BJ (cell line): ENCODE measurements at regions of chr12 and their contacts with region 1.

Region 1: DNA sequence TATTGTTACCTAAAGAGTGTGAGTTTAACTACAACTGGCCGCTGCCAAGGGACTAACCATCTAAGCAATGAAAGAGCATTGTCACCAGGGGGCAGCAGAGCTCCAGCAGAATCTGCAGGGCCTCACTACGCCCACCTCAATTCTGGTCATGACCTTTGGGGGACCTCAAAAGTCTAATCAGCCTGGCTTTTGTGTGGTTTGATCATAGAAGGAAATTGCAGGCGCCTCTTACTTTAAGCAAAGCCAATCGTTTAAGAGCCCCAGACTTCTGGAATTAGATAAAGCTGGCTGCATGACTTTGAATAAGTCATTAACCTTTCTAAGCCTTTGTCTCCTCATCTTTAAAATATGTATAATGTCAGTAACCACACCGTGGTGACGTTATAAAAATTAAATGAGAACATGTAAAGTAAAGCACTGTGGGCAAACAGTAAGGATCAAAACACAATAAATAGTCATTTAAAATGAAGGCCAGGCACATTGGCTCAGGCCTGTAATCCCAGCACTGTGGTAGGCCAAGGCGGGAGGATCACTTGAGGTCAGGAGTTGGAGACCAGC is 58.6 kb downstream of the TBX3 start:
- DNase-seq: peak; percentile 50
- H3K4me3 ChIP-seq: no peak overlapping the region
- H3K27me3 ChIP-seq: no peaks in the 10 kb centered on the region
- CTCF ChIP-seq: peak; percentile 90

Region 2: DNA sequence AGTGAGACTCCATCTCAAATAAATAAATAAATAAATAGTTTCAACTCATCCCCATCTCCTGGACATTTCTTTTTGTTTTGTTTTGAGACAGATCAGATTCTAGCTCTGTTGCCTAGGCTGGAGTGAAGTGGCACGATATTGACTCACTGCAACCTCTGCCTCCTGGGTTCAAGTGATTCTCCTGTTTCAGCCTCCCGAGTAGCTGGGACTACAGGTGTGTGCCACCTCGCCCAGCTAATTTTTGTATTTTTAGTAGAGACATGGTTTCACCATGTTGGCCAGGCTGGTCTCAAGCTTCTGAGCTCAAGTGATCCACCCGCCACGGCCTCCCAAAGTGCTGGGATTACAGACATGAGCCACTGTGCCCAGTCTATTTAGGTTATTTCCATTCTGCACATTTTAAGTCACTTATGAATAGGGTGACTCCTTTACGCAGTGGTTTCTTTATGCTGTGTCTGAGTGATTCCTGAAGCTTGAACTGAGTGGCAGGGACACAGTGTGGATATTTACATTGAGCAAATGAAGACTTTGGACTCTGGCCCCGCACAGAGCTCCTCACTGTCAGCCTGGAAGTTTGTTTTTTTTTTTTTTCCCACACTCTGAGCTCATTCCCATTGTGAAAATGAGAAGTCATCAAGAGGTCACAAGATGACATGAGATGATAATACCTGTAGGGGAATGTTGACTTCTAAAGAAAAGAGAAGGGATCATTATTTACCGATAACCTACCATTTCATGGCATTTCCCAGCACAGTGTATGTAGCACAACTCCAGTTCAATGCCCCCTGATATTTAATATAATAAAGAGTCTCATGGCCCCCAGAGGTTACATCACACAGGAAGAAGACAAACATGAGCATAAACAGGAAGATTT is 14.0 kb before region 1 on chr12:
- CTCF ChIA-PET with region 1: interaction called, 25 read pairs
- POLR2A ChIA-PET with region 1: no interaction called
- DNase-seq: no peak
- H3K4me3 ChIP-seq: no peak overlapping the region
- H3K27me3 ChIP-seq: no peaks in the 10 kb centered on the region; the same call in 1 of the 2 replicates
- CTCF ChIP-seq: no peak

Region 3: DNA sequence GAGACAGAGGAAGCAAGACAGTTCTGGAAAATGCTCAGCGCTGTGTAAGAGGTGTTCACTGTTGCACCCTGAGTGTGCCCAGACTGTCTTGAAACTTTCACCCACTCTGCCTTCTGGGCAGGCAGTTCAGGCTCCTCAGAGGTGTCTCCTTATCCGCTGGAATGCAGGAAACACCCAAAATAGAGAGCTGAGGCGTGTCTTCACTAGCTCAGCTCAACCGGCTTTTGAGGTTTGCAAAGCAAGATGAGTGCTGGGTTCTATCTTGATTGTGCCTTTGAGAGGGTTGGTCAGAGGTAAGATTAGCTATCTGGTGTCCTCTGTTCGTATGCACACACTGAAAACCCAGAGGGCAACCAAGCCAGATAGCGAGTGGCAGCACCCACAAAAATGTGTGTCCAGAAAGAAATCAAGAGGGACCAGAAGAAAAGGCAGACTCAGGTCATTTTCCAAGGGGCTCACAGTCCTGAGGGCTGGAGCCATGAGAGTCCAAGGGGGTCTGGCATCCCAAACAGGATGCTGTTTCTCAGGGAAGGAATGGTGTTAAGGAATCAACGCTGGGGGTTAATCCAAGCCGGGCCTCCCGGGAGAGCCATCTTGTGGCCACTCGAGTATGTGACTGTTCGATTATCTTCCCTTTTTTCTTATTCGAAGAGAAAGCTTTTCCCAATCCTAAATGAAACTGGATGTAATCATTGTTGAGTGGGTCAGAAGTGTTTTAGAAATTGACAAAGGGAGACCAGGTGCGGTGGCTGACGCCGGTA is 11.5 kb after region 1 on chr12:
- CTCF ChIA-PET with region 1: interaction called, 50 read pairs
- POLR2A ChIA-PET with region 1: no interaction called
- DNase-seq: no peak
- H3K4me3 ChIP-seq: no peak overlapping the region
- H3K27me3 ChIP-seq: no peaks in the 10 kb centered on the region
- CTCF ChIP-seq: peak; percentile 65

Region 4: GRCh38 chr12:114662512-114663177 is 37.3 kb after region 1 on chr12:
- CTCF ChIA-PET with region 1: interaction called, 19 read pairs
- POLR2A ChIA-PET with region 1: no interaction called
- DNase-seq: peak; percentile 91
- H3K4me3 ChIP-seq: no peak overlapping the region
- H3K27me3 ChIP-seq: no peaks in the 10 kb centered on the region
- CTCF ChIP-seq: peak; percentile 92

Region 5: DNA sequence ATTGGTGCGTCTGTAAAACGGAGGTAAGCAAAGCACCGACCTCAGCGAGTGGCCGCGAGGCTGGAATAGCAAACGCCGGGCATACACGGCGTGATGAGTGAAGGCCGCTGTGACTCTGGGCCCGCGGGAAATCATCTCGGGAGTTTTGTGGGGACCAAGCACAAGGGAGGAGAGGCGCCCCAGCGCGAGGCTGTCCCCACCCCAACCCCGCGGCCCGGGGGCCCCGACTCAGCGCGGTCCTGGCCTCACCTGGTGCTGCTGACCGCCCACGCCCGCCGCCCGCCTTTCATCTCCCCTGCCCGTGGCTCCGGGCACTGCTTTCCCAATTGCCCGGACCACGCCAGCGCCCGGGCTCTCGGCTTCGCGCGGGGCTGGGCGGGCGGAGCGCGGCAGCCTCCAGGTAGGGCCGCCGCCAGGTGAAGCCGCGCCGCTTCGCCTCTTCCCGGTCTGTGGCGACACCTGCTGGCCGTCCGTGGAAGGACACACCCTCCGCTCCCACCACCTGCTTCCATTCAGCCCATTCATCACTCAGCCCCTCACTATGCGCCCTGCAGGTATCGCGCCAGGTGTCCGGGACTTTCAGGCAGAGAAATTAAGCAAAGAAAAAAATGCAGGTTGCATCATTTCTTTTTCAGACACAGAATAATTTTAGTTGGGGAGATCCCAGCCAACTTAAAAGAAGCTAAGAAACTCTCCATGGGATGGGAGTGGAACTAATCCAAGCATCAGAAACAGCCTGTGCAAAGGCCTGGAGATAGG is 1291.7 kb after region 1 on chr12:
- CTCF ChIA-PET with region 1: interaction called, 39 read pairs
- POLR2A ChIA-PET with region 1: no interaction called
- DNase-seq: no peak
- H3K4me3 ChIP-seq: peak overlapping the region; percentile 39
- H3K27me3 ChIP-seq: 0 out of 2 replicates have a peak, but pooled peaks cover 2% of the 10 kb centered on the region
- CTCF ChIP-seq: peak; percentile 77

Region 6: GRCh38 chr12:115946867-115947696 is 1321.7 kb after region 1 on chr12:
- CTCF ChIA-PET with region 1: interaction called, 19 read pairs
- POLR2A ChIA-PET with region 1: no interaction called
- DNase-seq: no peak
- H3K4me3 ChIP-seq: no peak overlapping the region
- H3K27me3 ChIP-seq: no peaks in the 10 kb centered on the region
- CTCF ChIP-seq: peak; percentile 76